Activated CD8-positive, alpha-beta memory T cell treated with anti-CD3 and anti-CD28 coated beads, Interleukin-2, amount 10 ng/mL, durations not matched to agents 7 days and 5 days (primary cell): ENCODE measurements at regions of chr17 and their contacts with region 1.

Region 1: GRCh38 chr17:74330446-74330845 is 4.4 kb downstream of the KIF19 start:
- DNase-seq: no peak
- ATAC-seq: no peak
- H3K4me3 Mint-ChIP-seq: no peak overlapping the region
- H3K27ac Mint-ChIP-seq: no peak overlapping the region
- H3K4me1 Mint-ChIP-seq: peaks cover 48% of the 10 kb centered on the region
- H3K27me3 Mint-ChIP-seq: peaks cover 8% of the 10 kb centered on the region

Region 2: GRCh38 chr17:74305865-74306654 is 24.4 kb before region 1 on chr17:
- CTCF ChIA-PET with region 1: interaction called, 21 read pairs
- DNase-seq: no peak
- ATAC-seq: peak; percentile 46
- H3K4me3 Mint-ChIP-seq: no peak overlapping the region
- H3K27ac Mint-ChIP-seq: no peak overlapping the region
- H3K4me1 Mint-ChIP-seq: peaks cover 18% of the 10 kb centered on the region
- H3K27me3 Mint-ChIP-seq: peaks cover 4% of the 10 kb centered on the region